BJ (cell line): ENCODE measurements at regions of chr3 and their contacts with region 1.

Region 1: DNA sequence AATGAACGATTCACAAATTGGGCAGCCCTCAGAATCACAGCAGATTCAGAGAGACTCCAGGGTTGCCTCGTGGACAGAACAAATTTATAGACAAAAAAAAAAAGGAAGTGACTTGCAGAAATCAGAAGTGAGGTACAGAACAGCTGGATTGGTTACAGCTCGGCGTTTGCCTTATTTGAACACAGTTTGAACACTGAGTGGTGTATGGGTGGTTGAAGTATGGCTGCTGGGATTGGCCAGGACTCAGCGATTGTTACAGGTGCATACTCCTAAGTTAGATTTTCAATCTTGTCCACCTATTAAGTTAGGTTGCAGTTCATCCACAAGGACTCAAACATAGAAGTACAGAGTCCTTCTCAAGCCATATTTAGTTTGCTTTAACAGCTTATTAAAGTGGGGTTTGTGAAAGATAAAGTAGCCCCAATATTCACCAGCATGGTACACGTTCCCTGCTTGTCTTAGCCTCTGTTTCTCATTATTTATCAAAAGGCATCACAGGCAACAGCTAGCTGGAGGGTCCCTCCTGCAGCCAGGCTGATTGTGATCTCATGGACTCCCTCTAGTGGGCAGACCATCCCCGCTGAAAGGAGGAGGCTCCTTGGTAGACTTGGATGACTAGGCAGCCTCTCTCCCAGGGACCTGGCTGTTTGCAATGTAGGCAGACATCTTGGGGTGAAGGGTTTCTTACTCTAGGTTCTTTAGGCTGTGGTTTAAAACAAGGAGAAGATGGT is 17.6 kb upstream of the ALDH1L1 start:
- DNase-seq: no peak
- H3K4me3 ChIP-seq: no peak overlapping the region
- H3K27me3 ChIP-seq: no peaks in the 10 kb centered on the region
- CTCF ChIP-seq: peak; percentile 91

Region 2: GRCh38 chr3:126186271-126186670 is 11.7 kb before region 1 on chr3:
- CTCF ChIA-PET with region 1: interaction called, 41 read pairs
- POLR2A ChIA-PET with region 1: no interaction called
- DNase-seq: no peak
- H3K4me3 ChIP-seq: no peak overlapping the region
- H3K27me3 ChIP-seq: peaks cover 34% of the 10 kb centered on the region
- CTCF ChIP-seq: no peak

Region 3: GRCh38 chr3:126208618-126209256 is 10.7 kb after region 1 on chr3:
- CTCF ChIA-PET with region 1: interaction called, 48 read pairs
- POLR2A ChIA-PET with region 1: no interaction called
- DNase-seq: peak; percentile 51
- H3K4me3 ChIP-seq: no peak overlapping the region
- H3K27me3 ChIP-seq: no peaks in the 10 kb centered on the region
- CTCF ChIP-seq: no peak

Region 4: DNA sequence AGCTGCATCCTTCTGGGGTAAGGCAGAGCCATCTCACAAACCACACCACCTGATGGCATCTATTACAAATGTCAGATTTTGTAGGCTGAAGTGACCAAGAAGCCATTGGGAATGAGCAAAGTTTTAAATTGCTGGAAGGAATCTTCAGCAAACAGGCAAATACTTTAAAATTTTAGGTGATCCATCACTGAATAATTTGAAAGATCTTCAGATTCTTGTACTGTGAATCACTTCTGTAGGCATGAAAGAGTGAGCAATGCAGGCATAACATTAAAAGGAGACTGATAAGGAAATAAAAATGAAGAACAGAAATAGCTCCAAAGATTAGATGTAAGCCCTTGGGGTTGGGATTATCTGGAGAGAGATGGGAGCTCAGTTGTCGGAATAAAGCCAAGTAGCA is 18.4 kb after region 1 on chr3:
- CTCF ChIA-PET with region 1: interaction called, 48 read pairs
- POLR2A ChIA-PET with region 1: no interaction called
- DNase-seq: peak; percentile 25
- H3K4me3 ChIP-seq: no peak overlapping the region
- H3K27me3 ChIP-seq: no peaks in the 10 kb centered on the region
- CTCF ChIP-seq: no peak